ENCODE measurements at regions of chr15 and their contacts with region 1.

Region 1: GRCh38 chr15:58758138-58758537 is 8.6 kb upstream of the ADAM10 start:
- DNase-seq: no peak
- H3K4me3 ChIP-seq: no peak overlapping the region
- H3K27me3 ChIP-seq: no peaks in the 10 kb centered on the region
- CTCF ChIP-seq: peak; percentile 38

Region 2: DNA sequence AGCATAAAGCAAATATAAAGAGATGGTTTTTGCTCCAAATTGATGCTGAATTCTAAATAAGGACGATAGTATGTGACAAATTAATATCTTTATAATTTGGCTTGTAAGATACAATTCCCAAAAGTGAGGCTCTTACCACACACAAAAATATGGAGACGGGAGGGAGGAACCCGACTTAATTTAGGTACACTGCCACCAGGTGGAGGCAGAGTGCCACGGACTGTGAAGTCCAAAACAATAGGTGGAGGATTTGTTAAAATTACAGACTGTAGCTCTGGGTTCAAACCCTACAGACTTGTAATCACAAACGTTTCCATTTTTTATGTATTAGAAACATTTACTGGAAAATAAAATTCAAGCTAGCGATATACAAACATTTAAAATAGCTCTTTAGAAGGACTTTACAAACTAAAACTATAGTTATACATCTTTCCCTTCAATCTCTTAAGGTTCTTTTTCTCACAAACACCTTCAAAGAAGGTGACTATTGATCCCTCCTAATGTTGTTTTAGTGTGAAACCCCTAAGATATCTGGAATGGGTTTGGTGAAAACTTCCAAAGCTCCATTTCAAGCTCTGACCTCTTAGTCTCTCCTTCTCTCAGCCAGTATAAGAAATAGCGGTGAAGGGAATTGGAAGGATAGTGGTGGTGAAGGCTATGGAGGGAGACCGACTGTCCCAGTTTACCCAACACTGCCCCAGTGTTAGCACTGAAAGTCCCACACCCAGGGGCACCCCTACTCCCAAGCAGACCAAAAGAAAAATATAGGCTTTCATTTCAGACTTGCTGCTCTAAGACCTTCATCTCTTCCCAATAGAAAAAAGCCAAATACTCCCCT is 530.2 kb before region 1 on chr15:
- CTCF ChIA-PET with region 1: interaction called, 27 read pairs
- POLR2A ChIA-PET with region 1: no interaction called
- DNase-seq: no peak
- H3K4me3 ChIP-seq: no peak overlapping the region
- H3K27me3 ChIP-seq: peaks cover 7% of the 10 kb centered on the region
- CTCF ChIP-seq: peak; percentile 77

Region 3: DNA sequence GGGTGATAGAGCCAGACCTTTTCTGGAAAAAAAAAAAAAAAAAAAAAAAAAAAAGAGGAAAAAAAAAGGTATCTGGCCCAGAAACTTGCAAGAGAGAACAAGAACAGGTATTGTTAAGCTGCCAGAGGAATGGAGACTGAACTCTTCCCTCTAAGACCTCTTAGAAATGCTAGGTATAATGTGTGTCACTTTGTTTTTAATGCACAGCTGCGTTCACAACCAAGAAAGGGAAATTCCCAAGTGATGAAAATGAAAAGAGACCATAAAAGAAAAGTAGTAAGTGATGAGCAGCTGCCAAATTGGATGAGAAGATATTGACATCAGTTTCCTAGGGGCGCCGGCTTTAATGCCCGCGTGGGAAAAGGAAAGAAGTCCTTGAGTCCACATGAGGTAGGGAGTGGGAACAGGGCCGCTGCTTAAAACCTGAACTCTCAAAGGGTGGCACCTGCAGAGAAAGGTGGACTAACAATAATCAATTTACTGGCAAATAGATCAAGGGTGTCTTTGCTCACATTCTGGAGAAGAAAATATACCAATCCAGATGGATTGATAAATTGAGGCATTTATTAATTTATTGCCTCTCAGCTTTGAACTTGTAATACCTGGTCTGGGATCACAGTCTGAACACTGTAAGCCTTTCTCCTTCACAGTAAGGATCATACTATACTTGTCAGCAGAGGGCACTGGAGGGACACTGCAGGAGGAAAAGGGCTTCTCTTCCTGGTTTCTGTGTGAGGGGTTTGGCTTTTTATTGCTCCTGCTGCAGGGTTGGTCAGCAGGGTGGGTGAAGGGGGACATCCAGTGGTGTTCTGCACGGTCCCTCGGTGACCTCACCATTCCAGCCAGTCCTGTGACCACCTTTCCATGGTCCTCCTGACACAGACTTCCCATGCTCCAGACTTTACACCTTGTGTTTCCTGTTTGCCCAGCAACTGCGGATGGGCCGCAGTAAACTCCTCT is 488.4 kb before region 1 on chr15:
- CTCF ChIA-PET with region 1: interaction called, 19 read pairs
- POLR2A ChIA-PET with region 1: no interaction called
- DNase-seq: no peak
- H3K4me3 ChIP-seq: no peak overlapping the region
- H3K27me3 ChIP-seq: no peaks in the 10 kb centered on the region; the same call in 1 of the 2 replicates
- CTCF ChIP-seq: peak; percentile 81

Measured in BJ (cell line).